Mammary epithelial cell (primary cell): ENCODE measurements at regions of chr7 and their contacts with region 1.

Region 1: GRCh38 chr7:3056234-3057065 is 12.8 kb upstream of the CARD11 start:
- DNase-seq: no peak
- H3K4me3 ChIP-seq: no peak overlapping the region
- H3K27ac ChIP-seq: no peak overlapping the region
- H3K4me1 ChIP-seq: no peaks in the 10 kb centered on the region
- H3K27me3 ChIP-seq: no peaks in the 10 kb centered on the region
- CTCF ChIP-seq: no peak

Region 2: GRCh38 chr7:3358991-3359390 is 302.5 kb after region 1 on chr7:
- CTCF ChIA-PET with region 1: interaction called, 12 read pairs
- dilution Hi-C with region 1: no loop called
- in situ Hi-C with region 1: no loop called
- intact Hi-C with region 1: no loop called
- DNase-seq: no peak
- H3K4me3 ChIP-seq: no peak overlapping the region
- H3K27ac ChIP-seq: no peak overlapping the region
- H3K4me1 ChIP-seq: no peaks in the 10 kb centered on the region
- H3K27me3 ChIP-seq: no peaks in the 10 kb centered on the region
- CTCF ChIP-seq: no peak